ENCODE measurements at regions of chr1 and their contacts with region 1.

Region 1: DNA sequence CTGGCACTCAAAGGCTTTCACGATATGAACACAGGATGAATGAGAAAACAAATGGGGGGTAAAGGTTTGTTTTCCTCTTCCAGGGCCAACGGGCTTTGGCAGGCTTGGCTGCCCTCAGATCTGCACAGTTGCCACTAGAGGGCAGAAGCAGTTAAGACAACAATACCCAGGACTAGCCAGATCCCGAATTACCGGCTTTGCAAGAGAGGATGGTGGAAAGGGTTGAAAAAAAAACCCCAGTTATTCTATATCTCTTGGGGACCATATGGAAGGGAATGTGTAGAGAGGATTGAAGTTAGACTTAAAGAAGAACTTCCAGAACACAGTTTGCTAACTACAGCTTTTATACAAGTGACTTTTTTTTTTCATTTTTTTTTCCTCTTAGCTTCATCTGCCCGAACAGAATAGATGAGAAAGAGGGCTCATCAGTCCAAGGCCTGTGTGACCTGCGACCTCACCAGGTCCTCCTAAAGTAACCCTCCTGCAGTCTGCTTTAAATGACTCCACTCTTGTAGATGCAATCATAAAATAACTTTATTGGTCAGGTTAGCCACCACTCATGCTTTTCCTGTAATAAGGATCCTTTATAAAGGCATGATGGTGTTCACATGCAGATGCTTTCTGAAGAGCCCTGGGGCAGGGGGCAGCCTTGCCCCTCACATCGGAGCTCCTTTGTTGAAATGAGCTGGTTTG is 10.7 kb downstream of the FMOD start:
- DNase-seq: peak; percentile 73
- H3K4me3 Mint-ChIP-seq: no peak overlapping the region
- H3K27ac Mint-ChIP-seq: no peak overlapping the region
- H3K4me1 Mint-ChIP-seq: peaks cover 34% of the 10 kb centered on the region
- H3K27me3 Mint-ChIP-seq: peaks cover 52% of the 10 kb centered on the region

Region 2: GRCh38 chr1:203304919-203305808 is 35.1 kb before region 1 on chr1 and contains the start of gene BTG2:
- CTCF ChIA-PET with region 1: interaction called, 95 read pairs
- DNase-seq: peak; percentile 94
- H3K4me3 Mint-ChIP-seq: peak within 1 kb of the TSS; percentile 86
- H3K27ac Mint-ChIP-seq: peak within 1 kb of the TSS; percentile 90
- H3K4me1 Mint-ChIP-seq: peaks cover 61% of the 10 kb centered on the region
- H3K27me3 Mint-ChIP-seq: no peaks in the 10 kb centered on the region

Region 3: DNA sequence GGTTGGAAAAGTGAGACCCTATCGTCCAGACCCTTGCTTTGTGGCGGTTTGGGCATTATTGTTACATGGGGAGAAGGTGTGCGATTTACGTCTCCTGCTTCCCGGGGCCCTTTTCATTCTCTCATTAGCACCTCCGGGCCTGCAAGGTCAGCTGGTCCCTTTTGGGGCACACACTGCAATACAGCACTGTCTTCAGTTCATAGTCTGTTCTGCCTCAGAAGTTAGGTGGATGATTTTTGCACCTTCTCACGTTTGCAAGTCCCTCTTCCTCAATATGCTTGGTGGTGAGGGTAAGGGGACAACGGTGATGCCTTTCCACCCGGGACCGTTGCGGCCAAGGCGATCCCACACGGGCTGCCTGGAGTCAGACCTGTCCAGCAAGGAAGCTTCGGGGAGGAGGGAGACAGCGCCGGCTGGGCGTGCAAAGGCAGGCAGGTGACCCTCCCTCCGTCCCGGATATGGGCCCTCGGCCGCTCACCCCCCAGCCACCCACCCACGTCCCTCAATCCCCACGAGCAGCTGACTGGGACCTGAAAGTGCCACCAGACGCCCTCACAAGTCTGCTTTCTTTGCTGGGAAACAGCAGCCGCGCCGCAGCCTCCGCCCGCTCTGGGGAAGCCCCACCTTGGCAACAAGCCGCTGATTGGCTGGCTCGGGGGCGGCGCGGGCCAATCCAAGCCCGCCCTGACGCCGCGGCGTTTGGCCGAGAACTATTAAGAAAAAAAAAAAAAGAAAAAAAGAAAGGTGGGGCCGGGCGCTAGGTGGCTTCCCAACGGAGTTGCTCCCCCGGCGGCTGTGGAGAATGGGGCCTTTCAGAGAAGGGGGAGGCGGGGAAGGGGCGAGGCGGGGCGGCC is 13.2 kb before region 1 on chr1:
- CTCF ChIA-PET with region 1: interaction called, 33 read pairs
- DNase-seq: peak; percentile 96
- H3K4me3 Mint-ChIP-seq: peak overlapping the region; percentile 74
- H3K27ac Mint-ChIP-seq: peak overlapping the region; percentile 94
- H3K4me1 Mint-ChIP-seq: peaks cover 66% of the 10 kb centered on the region
- H3K27me3 Mint-ChIP-seq: peaks cover 5% of the 10 kb centered on the region

Region 4: GRCh38 chr1:203422656-203423055 is 82.4 kb after region 1 on chr1:
- CTCF ChIA-PET with region 1: no interaction called
- DNase-seq: no peak
- H3K4me3 Mint-ChIP-seq: no peak overlapping the region
- H3K27ac Mint-ChIP-seq: no peak overlapping the region
- H3K4me1 Mint-ChIP-seq: no peaks in the 10 kb centered on the region
- H3K27me3 Mint-ChIP-seq: peaks cover 48% of the 10 kb centered on the region

Region 5: DNA sequence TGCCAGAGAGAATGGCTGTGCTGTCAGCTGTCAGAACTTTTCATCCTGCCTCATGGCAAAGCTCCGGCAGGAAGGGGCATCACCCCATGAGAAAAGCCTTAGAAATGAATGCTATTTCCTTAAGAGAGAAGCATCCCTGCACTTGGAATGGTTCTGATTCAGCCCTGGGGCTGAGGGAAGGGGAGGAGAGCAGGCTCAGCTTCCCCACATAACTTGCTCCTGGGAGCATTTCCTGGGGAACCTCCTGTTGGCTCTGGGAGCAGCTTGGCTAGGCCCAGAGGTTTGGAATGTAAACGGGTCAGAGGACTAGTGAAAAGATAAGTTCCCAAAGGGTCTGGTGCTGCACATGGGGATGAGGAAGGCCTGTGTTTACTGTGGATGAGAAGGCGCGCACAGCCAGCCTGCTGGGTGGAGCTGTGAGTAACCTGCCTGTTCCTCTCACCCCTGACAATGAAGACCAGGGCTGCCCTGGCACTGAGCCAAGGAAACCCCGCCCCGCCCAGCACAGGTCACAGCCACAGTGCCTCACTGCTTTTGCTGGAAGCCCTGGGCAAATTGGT is 140.3 kb after region 1 on chr1:
- CTCF ChIA-PET with region 1: interaction called, 152 read pairs
- DNase-seq: peak; percentile 48
- H3K4me3 Mint-ChIP-seq: no peak overlapping the region
- H3K27ac Mint-ChIP-seq: no peak overlapping the region
- H3K4me1 Mint-ChIP-seq: peaks cover 5% of the 10 kb centered on the region
- H3K27me3 Mint-ChIP-seq: peaks cover 45% of the 10 kb centered on the region